Activated T-helper 2 cell treated with anti-CD3 and anti-CD28 coated beads, Interferon-gamma antibody, Interleukin-2, Interleukin-4, amounts not matched to agents 10 μg/mL and 5 μg/mL and 100 μg/mL, durations not matched to agents 14 hours and 24 hours and 36 hours (primary cell): ENCODE measurements at regions of chr6 and their contacts with region 1.

Region 1: GRCh38 chr6:147382945-147383554 is 125.4 kb upstream of the SAMD5 start:
- DNase-seq: no peak
- H3K4me3 Mint-ChIP-seq: no peak overlapping the region
- H3K27ac Mint-ChIP-seq: no peak overlapping the region
- H3K4me1 Mint-ChIP-seq: peaks cover 13% of the 10 kb centered on the region
- H3K27me3 Mint-ChIP-seq: no peaks in the 10 kb centered on the region

Region 2: GRCh38 chr6:146790429-146791091 is 592.5 kb before region 1 on chr6:
- intact Hi-C with region 1: loop called (anchors 10 kb)
- DNase-seq: no peak
- H3K4me3 Mint-ChIP-seq: no peak overlapping the region
- H3K27ac Mint-ChIP-seq: no peak overlapping the region
- H3K4me1 Mint-ChIP-seq: peaks cover 19% of the 10 kb centered on the region
- H3K27me3 Mint-ChIP-seq: no peaks in the 10 kb centered on the region

Region 3: DNA sequence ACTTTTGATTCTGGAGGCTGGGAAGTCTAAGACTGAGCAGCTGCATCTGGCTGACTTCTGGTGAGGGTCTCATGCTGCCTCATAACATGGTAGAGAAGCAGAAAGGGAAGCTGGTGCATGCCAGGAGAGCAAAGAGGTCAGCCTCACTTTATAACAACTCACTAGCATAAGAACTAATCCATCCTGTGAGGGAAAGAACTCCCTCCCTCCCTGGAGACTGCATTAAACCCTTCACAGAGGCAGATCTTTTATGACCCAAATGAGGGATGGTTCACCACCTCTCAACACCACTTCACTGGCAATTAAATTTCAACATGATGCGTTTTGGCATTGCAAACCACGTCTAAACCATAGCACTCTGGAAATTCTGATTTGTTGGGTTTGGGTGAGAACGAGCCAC is 144.9 kb before region 1 on chr6:
- intact Hi-C with region 1: no loop called
- DNase-seq: no peak
- H3K4me3 Mint-ChIP-seq: no peak overlapping the region
- H3K27ac Mint-ChIP-seq: no peak overlapping the region
- H3K4me1 Mint-ChIP-seq: peaks cover 1% of the 10 kb centered on the region
- H3K27me3 Mint-ChIP-seq: no peaks in the 10 kb centered on the region

Region 4: GRCh38 chr6:147322299-147323162 is 60.5 kb before region 1 on chr6:
- intact Hi-C with region 1: loop called (anchors 2 kb)
- DNase-seq: peak; percentile 11
- H3K4me3 Mint-ChIP-seq: peak overlapping the region; percentile 55
- H3K27ac Mint-ChIP-seq: peak overlapping the region; percentile 79
- H3K4me1 Mint-ChIP-seq: peaks cover 18% of the 10 kb centered on the region
- H3K27me3 Mint-ChIP-seq: no peaks in the 10 kb centered on the region